SK-N-SH (cell line): ENCODE measurements at regions of chr6 and their contacts with region 1.

Region 1: DNA sequence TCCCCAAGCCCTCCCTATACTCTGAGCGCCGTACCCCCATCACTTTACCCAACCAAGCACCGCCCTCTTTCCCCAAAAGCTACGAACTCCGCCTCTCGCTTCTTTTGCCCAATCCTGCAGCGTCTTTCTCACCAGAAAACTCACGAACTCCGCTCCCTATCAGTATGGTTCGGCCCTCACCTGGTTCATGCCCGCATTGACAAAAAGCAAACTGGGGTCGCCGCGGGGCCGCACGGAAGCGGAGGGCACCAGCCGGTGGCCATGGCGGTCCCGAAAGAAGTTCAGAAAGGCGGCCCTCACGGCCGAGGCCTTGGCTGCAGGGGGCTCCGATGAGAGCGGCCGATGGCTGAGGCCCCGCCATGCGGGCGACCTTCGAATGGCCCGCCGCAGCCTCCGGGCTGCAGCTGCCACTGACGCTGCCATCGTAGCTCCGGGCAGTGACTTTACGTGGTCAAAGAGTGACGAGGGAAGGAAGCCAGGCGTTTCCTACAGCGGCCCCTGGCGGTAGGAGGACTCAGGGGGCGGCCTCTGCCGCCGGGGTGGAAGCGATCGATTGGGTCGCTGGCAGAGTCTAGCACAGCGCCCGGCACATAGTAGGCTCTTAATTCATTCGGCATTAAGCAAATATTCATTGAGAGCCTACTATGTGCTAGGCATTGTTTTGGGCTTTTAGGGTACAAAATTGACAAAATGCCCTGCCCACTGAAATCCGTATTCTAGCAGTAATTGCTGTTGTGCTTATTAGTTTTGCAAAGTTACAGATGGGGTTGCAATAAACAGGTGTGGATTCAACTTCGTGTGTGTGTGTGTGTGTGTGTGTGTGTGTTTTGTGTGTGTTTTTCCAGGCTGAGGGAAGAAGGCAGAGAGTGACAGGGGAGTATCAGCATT is at the start of gene AARS2:
- DNase-seq: peak; percentile 92
- H3K4me3 ChIP-seq: peak within 1 kb of the TSS; percentile 90 to 96
- H3K27ac ChIP-seq: peak within 1 kb of the TSS; percentile 24 to 85; a peak in 3 of 4 replicates
- H3K4me1 ChIP-seq: peaks cover 4 to 8% of the 10 kb centered on the region in 2 experiments; a peak in 3 of 4 replicates
- H3K27me3 ChIP-seq: no peaks in the 10 kb centered on the region
- CTCF ChIP-seq: peak; percentile 95
- EP300 ChIP-seq: peak in 1 of 2 experiments; percentile 15; a peak in 1 of 4 replicates
- RAD21 ChIP-seq: no peak
- polyA plus RNA-seq, gene AARS2: 9.0 and 9.5 TPM in 2 replicates

Region 2: DNA sequence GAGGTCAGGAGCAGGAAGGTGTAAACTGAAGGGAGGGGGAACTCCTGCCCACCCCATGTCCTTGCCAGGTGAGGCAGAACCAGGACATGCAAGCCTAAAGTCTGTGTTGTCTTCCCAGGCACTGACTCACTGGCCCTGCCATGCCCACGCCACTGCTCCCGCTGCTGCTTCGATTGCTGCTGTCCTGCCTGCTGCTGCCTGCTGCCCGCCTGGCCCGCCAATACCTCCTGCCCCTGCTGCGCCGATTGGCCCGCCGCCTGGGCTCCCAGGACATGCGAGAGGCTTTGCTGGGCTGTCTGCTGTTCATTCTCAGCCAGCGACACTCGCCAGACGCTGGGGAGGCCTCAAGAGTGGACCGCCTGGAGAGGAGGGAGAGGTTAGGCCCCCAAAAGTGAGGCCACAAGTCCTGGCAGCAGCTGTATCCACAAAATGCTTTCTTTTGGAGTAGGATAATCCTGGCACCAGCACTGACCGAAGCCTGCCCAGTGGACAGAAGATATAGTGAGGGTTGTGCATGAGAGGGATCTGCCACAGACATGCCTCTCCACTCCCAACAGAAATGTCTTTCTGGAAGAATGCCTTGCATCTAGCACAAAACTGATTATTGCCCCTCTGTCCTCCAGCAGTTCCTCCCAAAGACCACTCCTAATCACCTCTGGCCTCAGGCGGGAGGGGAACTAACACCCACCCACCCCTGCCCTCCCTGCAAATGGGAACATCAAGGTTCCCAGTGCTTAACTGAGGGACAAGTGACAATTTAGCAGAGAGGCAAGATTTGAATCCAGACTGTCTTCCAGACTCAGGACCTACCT is 95.6 kb before region 1 on chr6:
- CTCF ChIA-PET with region 1: no interaction called
- POLR2A ChIA-PET with region 1: no interaction called
- DNase-seq: no peak
- H3K4me3 ChIP-seq: no peak overlapping the region
- H3K27ac ChIP-seq: no peak overlapping the region
- H3K4me1 ChIP-seq: peaks cover 9 to 35% of the 10 kb centered on the region in 2 experiments; a peak in 3 of 4 replicates
- H3K27me3 ChIP-seq: no peaks in the 10 kb centered on the region
- CTCF ChIP-seq: no peak
- EP300 ChIP-seq: no peak
- RAD21 ChIP-seq: no peak

Region 3: DNA sequence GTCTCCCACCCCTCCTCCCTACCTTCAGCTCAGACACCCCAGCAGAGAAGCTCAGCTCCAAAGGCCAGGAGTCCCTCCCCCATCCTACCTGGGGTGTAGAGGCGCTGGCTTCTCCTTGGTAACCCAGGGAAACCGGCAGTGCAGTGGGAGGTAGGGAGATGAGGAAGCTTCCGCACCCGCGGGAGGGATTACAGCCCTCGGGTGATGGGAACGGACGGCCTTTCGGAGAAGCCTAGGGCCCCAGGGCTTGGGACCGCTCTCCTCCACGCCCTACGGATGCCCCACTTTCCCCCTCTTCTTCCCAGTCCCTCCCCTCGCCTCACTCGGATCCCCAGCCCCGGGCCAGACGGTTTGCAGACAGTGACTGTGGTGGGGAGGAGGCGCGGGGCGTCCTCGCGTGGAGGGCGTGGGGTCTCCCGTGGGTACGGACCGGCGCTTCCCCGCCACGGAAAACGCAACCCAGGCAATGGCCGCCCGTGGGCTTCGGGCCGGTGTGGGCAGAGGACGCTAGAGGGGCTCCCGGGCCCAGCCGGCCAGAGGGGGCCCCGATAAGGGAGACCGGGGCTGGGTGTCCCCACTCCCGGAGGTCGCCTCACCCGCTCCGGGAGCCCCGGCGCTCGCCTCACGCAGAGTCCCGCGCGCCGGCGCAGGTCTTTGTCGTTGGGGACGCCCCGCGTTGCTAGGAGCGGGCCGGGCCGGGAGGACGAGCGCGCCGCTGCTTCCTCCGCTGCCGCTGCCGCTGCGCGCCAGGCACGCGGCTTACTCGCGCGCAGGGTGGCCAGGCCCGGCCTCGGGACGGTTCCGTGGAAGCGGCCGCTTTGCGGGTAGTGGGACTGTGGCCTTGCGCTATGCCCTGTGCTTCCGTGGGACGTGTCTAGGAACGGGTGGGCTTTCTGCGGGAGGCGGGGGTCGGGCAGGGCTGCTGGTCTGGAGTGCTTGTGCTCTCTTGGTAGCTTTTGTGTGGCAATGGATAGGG is 15.8 kb before region 1 on chr6:
- CTCF ChIA-PET with region 1: interaction called, 22 read pairs
- POLR2A ChIA-PET with region 1: interaction called, 8 read pairs
- DNase-seq: peak; percentile 89
- H3K4me3 ChIP-seq: peak overlapping the region; percentile 56 to 58
- H3K27ac ChIP-seq: no peak overlapping the region
- H3K4me1 ChIP-seq: peaks cover 0 to 15% of the 10 kb centered on the region in 2 experiments; a peak in 1 of 4 replicates
- H3K27me3 ChIP-seq: peaks cover 16% of the 10 kb centered on the region; the same call in 1 of the 2 replicates
- CTCF ChIP-seq: no peak
- EP300 ChIP-seq: no peak
- RAD21 ChIP-seq: no peak

Region 4: GRCh38 chr6:44327096-44327495 is 14.0 kb after region 1 on chr6:
- CTCF ChIA-PET with region 1: interaction called, 38 read pairs
- POLR2A ChIA-PET with region 1: no interaction called
- DNase-seq: no peak
- H3K4me3 ChIP-seq: no peak overlapping the region
- H3K27ac ChIP-seq: no peak overlapping the region
- H3K4me1 ChIP-seq: no peaks in the 10 kb centered on the region
- H3K27me3 ChIP-seq: peaks cover 21% of the 10 kb centered on the region
- CTCF ChIP-seq: no peak
- EP300 ChIP-seq: no peak
- RAD21 ChIP-seq: no peak

Region 5: GRCh38 chr6:44332585-44332984 is 19.4 kb after region 1 on chr6:
- CTCF ChIA-PET with region 1: interaction called, 40 read pairs
- POLR2A ChIA-PET with region 1: interaction called, 4 read pairs
- DNase-seq: no peak
- H3K4me3 ChIP-seq: no peak overlapping the region
- H3K27ac ChIP-seq: no peak overlapping the region
- H3K4me1 ChIP-seq: peaks cover 0 to 6% of the 10 kb centered on the region in 2 experiments; a peak in 1 of 4 replicates
- H3K27me3 ChIP-seq: peaks cover 38% of the 10 kb centered on the region
- CTCF ChIP-seq: no peak
- EP300 ChIP-seq: no peak
- RAD21 ChIP-seq: no peak